Calu3 (cell line): ENCODE measurements at regions of chr5 and their contacts with region 1.

Region 1: DNA sequence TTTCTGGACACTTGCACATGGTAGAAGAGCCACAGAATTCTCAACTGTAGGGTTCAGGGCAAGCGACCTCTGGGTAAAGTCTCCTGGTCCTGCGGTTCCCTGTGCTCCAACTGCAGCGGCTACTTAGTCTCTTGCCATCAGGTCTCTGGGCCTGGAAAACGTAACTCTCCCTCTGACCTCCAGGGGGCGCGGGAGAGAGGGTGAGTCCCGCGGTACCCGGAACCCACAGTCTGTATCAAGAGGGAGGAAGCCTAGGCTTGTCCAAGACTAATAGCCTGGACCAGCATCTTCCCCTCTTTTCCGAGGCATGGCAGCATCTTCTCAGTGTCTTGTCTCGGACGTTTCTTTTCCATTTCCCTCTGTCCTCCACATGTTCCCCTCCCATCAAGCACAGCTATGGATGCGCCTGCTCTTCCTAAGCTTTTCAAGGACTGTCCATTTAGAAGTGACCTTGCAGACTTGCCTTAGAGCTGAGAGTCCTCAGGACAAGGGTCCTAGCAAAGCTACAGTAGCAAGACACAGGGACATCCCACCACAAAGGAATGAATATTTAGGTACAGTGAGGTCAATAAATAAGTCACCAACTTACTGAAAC is 59.3 kb downstream of the FSTL4 start:
- DNase-seq: peak; percentile 78
- H3K4me3 Mint-ChIP-seq: no peak overlapping the region
- H3K27ac Mint-ChIP-seq: no peak overlapping the region
- H3K4me1 Mint-ChIP-seq: no peaks in the 10 kb centered on the region
- H3K27me3 Mint-ChIP-seq: peaks cover 93% of the 10 kb centered on the region
- CTCF ChIP-seq: peak; percentile 79

Region 2: GRCh38 chr5:133533541-133533940 is 19.5 kb before region 1 on chr5:
- CTCF ChIA-PET with region 1: no interaction called
- intact Hi-C with region 1: no loop called
- DNase-seq: no peak
- H3K4me3 Mint-ChIP-seq: no peak overlapping the region
- H3K27ac Mint-ChIP-seq: no peak overlapping the region
- H3K4me1 Mint-ChIP-seq: no peaks in the 10 kb centered on the region
- H3K27me3 Mint-ChIP-seq: peaks cover 86% of the 10 kb centered on the region
- CTCF ChIP-seq: no peak

Region 3: GRCh38 chr5:133868946-133869518 is 316.0 kb after region 1 on chr5:
- CTCF ChIA-PET with region 1: no interaction called
- intact Hi-C with region 1: loop called (anchors 2 kb)
- DNase-seq: peak; percentile 84
- H3K4me3 Mint-ChIP-seq: no peak overlapping the region
- H3K27ac Mint-ChIP-seq: no peak overlapping the region
- H3K4me1 Mint-ChIP-seq: no peaks in the 10 kb centered on the region
- H3K27me3 Mint-ChIP-seq: peaks cover 63% of the 10 kb centered on the region
- CTCF ChIP-seq: peak; percentile 81

Region 4: GRCh38 chr5:133926489-133927299 is 373.7 kb after region 1 on chr5:
- CTCF ChIA-PET with region 1: no interaction called
- intact Hi-C with region 1: no loop called
- DNase-seq: peak; percentile 46
- H3K4me3 Mint-ChIP-seq: no peak overlapping the region
- H3K27ac Mint-ChIP-seq: no peak overlapping the region
- H3K4me1 Mint-ChIP-seq: peaks cover 22% of the 10 kb centered on the region
- H3K27me3 Mint-ChIP-seq: peaks cover 41% of the 10 kb centered on the region
- CTCF ChIP-seq: no peak

Region 5: GRCh38 chr5:133944263-133945185 is 391.5 kb after region 1 on chr5:
- CTCF ChIA-PET with region 1: no interaction called
- intact Hi-C with region 1: loop called (anchors 2 kb)
- DNase-seq: peak; percentile 81
- H3K4me3 Mint-ChIP-seq: no peak overlapping the region
- H3K27ac Mint-ChIP-seq: no peak overlapping the region
- H3K4me1 Mint-ChIP-seq: peaks cover 12% of the 10 kb centered on the region
- H3K27me3 Mint-ChIP-seq: peaks cover 27% of the 10 kb centered on the region
- CTCF ChIP-seq: peak; percentile 78